PC-9 (cell line): ENCODE measurements at regions of chr10 and their contacts with region 1.

Region 1: GRCh38 chr10:53256623-53257022 is 484.0 kb upstream of the MBL2 start:
- DNase-seq: peak; percentile 48 to 92
- H3K4me3 ChIP-seq: no peak overlapping the region
- H3K27ac ChIP-seq: peak overlapping the region; percentile 65
- H3K4me1 ChIP-seq: peaks cover 20% of the 10 kb centered on the region
- H3K27me3 ChIP-seq: no peaks in the 10 kb centered on the region
- CTCF ChIP-seq: no peak

Region 2: GRCh38 chr10:53025172-53025711 is 231.4 kb before region 1 on chr10:
- CTCF ChIA-PET with region 1: no interaction called
- POLR2A ChIA-PET with region 1: no interaction called
- intact Hi-C with region 1: loop called (anchors 5 kb)
- DNase-seq: peak; percentile 29 to 49
- H3K4me3 ChIP-seq: peak overlapping the region; percentile 40; the same call in 1 of the 2 replicates
- H3K27ac ChIP-seq: peak overlapping the region; percentile 51
- H3K4me1 ChIP-seq: peaks cover 30% of the 10 kb centered on the region
- H3K27me3 ChIP-seq: no peaks in the 10 kb centered on the region
- CTCF ChIP-seq: no peak

Region 3: GRCh38 chr10:53298443-53298842 is 41.8 kb after region 1 on chr10:
- CTCF ChIA-PET with region 1: no interaction called
- POLR2A ChIA-PET with region 1: no interaction called
- intact Hi-C with region 1: no loop called
- DNase-seq: no peak
- H3K4me3 ChIP-seq: no peak overlapping the region
- H3K27ac ChIP-seq: no peak overlapping the region
- H3K4me1 ChIP-seq: no peaks in the 10 kb centered on the region
- H3K27me3 ChIP-seq: no peaks in the 10 kb centered on the region
- CTCF ChIP-seq: no peak